Heart right ventricle (tissue), 16 donors: ENCODE measurements at regions of chr12 and their contacts with region 1.

Region 1: GRCh38 chr12:106223485-106224354 is 24.1 kb downstream of the CKAP4 start:
- DNase-seq: peak; percentile 60 to 68
- ATAC-seq: peak; percentile 59 to 86 (median 74)
- H3K4me3 ChIP-seq: no peak overlapping the region
- H3K27ac ChIP-seq: peak overlapping the region in 1 of 10 donors; percentile 24
- H3K4me1 ChIP-seq: peaks cover 0 to 22% (median 7%) of the 10 kb centered on the region in 9 donors
- H3K27me3 ChIP-seq: no peaks in the 10 kb centered on the region
- CTCF ChIP-seq: peak; percentile 93 to 97 (median 95)

Region 2: GRCh38 chr12:105672121-105672975 is 551.4 kb before region 1 on chr12:
- intact Hi-C with region 1: no loop called
- DNase-seq: peak; percentile 84 to 86
- ATAC-seq: peak; percentile 77 to 94 (median 90)
- H3K4me3 ChIP-seq: no peak overlapping the region
- H3K27ac ChIP-seq: peak overlapping the region; percentile 32 to 86 (median 64)
- H3K4me1 ChIP-seq: peaks cover 4 to 59% (median 30%) of the 10 kb centered on the region in 9 donors
- H3K27me3 ChIP-seq: no peaks in the 10 kb centered on the region
- CTCF ChIP-seq: no peak

Region 3: DNA sequence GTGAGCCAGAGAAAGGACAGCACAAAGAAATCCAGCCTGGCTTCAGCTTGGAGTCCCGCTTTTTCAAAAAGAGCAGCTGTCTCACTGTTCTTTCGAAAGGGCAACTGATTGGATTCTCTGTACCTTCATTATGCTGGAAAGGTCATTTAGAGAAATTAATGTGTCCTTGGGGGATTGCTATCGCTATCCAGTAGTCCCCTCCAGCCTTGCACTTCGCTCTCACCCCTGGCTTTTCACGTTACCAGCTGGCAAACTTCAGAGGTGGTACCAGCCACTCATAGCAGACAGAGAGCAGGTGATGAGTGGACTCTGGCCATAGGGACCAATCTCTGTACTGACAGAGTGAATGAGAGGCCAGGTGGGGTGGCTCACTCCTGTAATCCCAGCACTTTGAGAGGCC is 73.2 kb before region 1 on chr12:
- intact Hi-C with region 1: no loop called
- DNase-seq: no peak
- ATAC-seq: peak in 1 of 8 donors; percentile 17
- H3K4me3 ChIP-seq: no peak overlapping the region
- H3K27ac ChIP-seq: no peak overlapping the region
- H3K4me1 ChIP-seq: peaks cover 7 to 38% (median 23%) of the 10 kb centered on the region in 9 donors
- H3K27me3 ChIP-seq: no peaks in the 10 kb centered on the region
- CTCF ChIP-seq: no peak

Region 4: DNA sequence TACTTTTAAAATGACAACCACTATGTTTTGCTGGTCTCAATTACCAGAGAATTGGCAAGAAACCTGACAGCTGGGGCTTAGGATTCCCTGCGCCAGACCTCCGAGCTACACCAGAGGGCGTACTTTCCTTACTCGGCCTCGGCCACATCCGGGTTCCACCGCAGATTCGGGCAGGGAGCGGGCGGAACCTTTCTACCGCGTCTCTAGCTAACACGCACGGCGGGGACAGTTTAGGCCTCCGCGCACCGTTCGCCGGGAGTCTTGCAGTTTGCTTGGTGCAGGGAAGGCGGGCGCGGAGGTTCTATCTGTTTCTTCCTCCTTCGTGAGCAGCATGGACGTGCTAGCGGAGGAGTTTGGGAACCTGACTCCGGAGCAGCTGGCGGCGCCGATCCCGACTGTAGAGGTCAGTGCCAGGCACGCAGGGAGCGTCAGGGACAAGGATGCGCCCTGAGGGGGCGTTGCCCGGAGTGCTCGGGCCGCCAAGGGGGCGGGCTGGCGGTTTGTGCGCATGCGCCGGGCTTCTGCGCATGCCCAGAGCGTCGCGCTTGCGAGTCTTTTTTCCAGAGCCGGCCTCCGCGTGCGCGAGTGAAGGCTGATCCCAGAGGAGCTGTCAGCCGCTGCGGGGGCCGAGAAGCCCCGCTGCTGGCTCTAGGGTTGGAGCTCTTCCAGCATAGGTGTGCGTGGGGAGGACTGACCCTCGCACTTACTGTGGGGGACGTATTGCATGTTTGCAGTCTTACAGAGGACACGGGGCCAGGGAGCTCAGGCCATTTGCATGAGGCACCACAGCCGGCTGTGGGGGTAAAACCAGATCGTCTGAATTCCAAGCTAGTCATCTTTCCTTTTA is 134.1 kb after region 1 on chr12 and contains the start of gene POLR3B:
- intact Hi-C with region 1: loop called in 2 of 10 experiments (anchors 5 kb)
- DNase-seq: peak; percentile 94 to 96
- ATAC-seq: peak; percentile 94 to 99 (median 96)
- H3K4me3 ChIP-seq: peak within 1 kb of the TSS; percentile 54 to 90 (median 70)
- H3K27ac ChIP-seq: peak within 1 kb of the TSS; percentile 89 to 96 (median 94)
- H3K4me1 ChIP-seq: peaks cover 3 to 27% (median 20%) of the 10 kb centered on the region in 9 donors
- H3K27me3 ChIP-seq: no peaks in the 10 kb centered on the region
- CTCF ChIP-seq: peak; percentile 81 to 98 (median 91)
- total RNA-seq, gene POLR3B: 7.4 to 12.0 (median 9.6) TPM

Region 5: GRCh38 chr12:106378788-106379187 is 155.1 kb after region 1 on chr12:
- intact Hi-C with region 1: no loop called
- DNase-seq: no peak
- ATAC-seq: no peak
- H3K4me3 ChIP-seq: no peak overlapping the region
- H3K27ac ChIP-seq: no peak overlapping the region
- H3K4me1 ChIP-seq: no peaks in the 10 kb centered on the region
- H3K27me3 ChIP-seq: no peaks in the 10 kb centered on the region
- CTCF ChIP-seq: no peak